Activated CD4-positive, alpha-beta memory T cell treated with anti-CD3 and anti-CD28 coated beads for 36 hours (primary cell): ENCODE measurements at regions of chr20 and their contacts with region 1.

Region 1: DNA sequence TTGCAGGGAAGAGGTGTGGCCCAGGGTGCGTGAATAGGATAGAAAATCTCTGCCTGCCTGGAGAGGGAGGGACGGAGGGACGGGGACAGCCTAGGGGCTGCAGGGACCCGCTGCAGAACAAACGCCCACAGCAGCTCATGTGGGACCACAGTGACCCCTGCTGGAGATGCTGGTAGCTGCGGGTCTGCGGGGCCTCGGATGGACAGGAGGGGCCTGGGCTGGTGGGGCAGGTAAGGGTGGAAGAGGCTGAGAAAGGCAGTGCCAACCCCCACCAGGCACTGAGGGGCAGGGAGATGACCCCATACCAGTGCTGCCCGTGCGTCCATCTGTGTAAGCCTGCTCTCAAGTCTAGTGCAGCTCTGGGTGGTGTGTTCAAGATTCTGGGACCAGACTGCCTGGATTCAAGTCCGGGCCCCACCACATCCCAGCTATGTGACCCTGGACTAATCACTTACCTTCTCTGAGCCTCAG is 39.4 kb downstream of the KIAA1755 start:
- DNase-seq: peak; percentile 78
- H3K4me3 Mint-ChIP-seq: no peak overlapping the region
- H3K27ac Mint-ChIP-seq: no peak overlapping the region
- H3K4me1 Mint-ChIP-seq: no peaks in the 10 kb centered on the region
- H3K27me3 Mint-ChIP-seq: peaks cover 2% of the 10 kb centered on the region

Region 2: GRCh38 chr20:37901654-37902503 is 319.3 kb before region 1 on chr20:
- CTCF ChIA-PET with region 1: interaction called, 3 read pairs
- POLR2A ChIA-PET with region 1: no interaction called
- intact Hi-C with region 1: loop called (anchors 10 kb)
- DNase-seq: peak; percentile 55
- H3K4me3 Mint-ChIP-seq: peak overlapping the region; percentile 31
- H3K27ac Mint-ChIP-seq: no peak overlapping the region
- H3K4me1 Mint-ChIP-seq: peaks cover 14% of the 10 kb centered on the region
- H3K27me3 Mint-ChIP-seq: peaks cover 59% of the 10 kb centered on the region

Region 3: DNA sequence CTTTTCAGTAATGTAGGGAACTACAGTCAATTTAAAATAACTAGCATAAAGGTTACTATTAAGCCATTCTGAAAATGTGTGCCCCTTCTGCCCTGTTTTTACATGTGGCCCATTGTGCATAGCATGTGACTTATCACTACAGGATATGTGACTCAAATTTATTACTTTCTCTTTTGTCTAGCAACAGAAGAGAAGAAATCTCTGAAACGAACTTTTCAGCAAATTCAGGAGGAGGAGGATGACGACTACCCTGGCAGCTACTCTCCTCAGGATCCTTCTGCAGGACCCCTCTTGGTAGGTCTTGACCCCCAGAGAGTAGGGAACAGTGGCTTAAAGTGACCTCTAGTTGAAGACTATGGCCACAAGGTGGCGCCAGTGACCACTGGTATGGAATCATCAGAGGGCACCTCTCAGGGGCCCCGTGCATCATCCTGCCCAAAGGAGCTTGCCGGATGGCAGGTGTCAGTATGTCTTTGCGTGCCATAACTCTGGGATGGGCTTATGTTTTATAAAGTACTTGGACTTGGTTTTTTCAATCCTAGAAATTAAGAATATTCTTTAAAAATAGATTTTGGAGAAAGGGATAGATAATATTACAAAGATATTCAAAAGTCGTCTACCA is 163.7 kb before region 1 on chr20:
- CTCF ChIA-PET with region 1: interaction called, 42 read pairs
- POLR2A ChIA-PET with region 1: no interaction called
- intact Hi-C with region 1: loop called (anchors 1 kb)
- DNase-seq: peak; percentile 78
- H3K4me3 Mint-ChIP-seq: no peak overlapping the region
- H3K27ac Mint-ChIP-seq: peak overlapping the region; percentile 68
- H3K4me1 Mint-ChIP-seq: peaks cover 37% of the 10 kb centered on the region
- H3K27me3 Mint-ChIP-seq: no peaks in the 10 kb centered on the region

Region 4: DNA sequence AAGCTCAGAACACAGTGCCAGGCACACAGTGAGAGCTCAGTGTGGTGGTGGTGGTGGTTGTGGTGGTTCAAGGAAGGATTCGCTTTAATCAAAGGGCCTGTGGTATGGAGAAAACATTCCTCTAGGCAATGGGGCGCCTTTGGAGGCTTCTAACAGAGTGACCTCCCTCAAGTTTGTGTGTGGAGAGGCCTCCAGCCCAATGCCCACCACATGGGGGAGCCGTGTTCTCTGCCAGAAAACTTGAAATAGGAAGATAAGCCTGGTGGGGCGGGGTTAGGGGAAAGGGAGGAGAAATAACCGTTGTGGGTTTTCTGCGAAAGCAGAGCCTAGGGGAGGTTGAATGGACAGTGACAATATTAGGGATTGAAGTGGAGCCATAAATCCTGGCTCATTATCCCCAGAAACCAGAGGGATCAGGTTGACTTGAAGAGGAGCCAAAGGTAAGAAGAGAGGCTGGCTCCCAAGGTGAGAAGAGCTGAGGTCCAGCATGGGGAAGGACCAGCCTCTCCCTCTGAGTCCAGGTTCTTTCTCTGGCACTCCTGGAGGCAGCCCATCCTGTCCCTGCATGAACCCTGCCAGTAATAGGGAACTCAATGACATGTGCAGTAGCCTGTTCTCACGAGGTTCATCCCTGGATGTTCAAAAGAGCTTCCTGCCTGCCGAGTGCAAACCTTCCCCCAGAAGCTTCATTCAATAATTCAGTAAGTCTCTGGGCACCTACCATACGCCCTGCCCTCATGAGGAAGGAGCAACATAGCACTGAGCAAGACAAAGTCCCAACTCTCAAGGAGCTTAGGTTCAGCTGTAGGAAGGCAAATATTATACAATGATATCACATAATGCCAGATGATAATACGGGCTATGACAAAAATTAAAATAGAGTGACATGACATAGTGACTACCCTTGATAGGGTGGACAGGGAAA is 107.5 kb before region 1 on chr20:
- CTCF ChIA-PET with region 1: interaction called, 18 read pairs
- POLR2A ChIA-PET with region 1: no interaction called
- intact Hi-C with region 1: no loop called
- DNase-seq: peak; percentile 15
- H3K4me3 Mint-ChIP-seq: no peak overlapping the region
- H3K27ac Mint-ChIP-seq: no peak overlapping the region
- H3K4me1 Mint-ChIP-seq: no peaks in the 10 kb centered on the region
- H3K27me3 Mint-ChIP-seq: no peaks in the 10 kb centered on the region

Region 5: GRCh38 chr20:38210741-38211140 is 10.4 kb before region 1 on chr20:
- CTCF ChIA-PET with region 1: interaction called, 20 read pairs
- POLR2A ChIA-PET with region 1: no interaction called
- intact Hi-C with region 1: no loop called
- DNase-seq: no peak
- H3K4me3 Mint-ChIP-seq: no peak overlapping the region
- H3K27ac Mint-ChIP-seq: no peak overlapping the region
- H3K4me1 Mint-ChIP-seq: no peaks in the 10 kb centered on the region
- H3K27me3 Mint-ChIP-seq: peaks cover 7% of the 10 kb centered on the region

Region 6: GRCh38 chr20:38315290-38315966 is 94.3 kb after region 1 on chr20:
- CTCF ChIA-PET with region 1: no interaction called
- POLR2A ChIA-PET with region 1: no interaction called
- intact Hi-C with region 1: no loop called
- DNase-seq: no peak
- H3K4me3 Mint-ChIP-seq: no peak overlapping the region
- H3K27ac Mint-ChIP-seq: no peak overlapping the region
- H3K4me1 Mint-ChIP-seq: no peaks in the 10 kb centered on the region
- H3K27me3 Mint-ChIP-seq: peaks cover 21% of the 10 kb centered on the region

Region 7: GRCh38 chr20:38523697-38524096 is 302.5 kb after region 1 on chr20:
- CTCF ChIA-PET with region 1: no interaction called
- POLR2A ChIA-PET with region 1: no interaction called
- intact Hi-C with region 1: no loop called
- DNase-seq: no peak
- H3K4me3 Mint-ChIP-seq: no peak overlapping the region
- H3K27ac Mint-ChIP-seq: no peak overlapping the region
- H3K4me1 Mint-ChIP-seq: peaks cover 5% of the 10 kb centered on the region
- H3K27me3 Mint-ChIP-seq: no peaks in the 10 kb centered on the region